ENCODE measurements at regions of chr7 and their contacts with region 1.

Region 1: GRCh38 chr7:151351027-151351426 is 9.4 kb downstream of the NUB1 start:
- DNase-seq: peak; percentile 55
- H3K4me3 ChIP-seq: no peak overlapping the region
- H3K27ac ChIP-seq: no peak overlapping the region
- H3K4me1 ChIP-seq: peaks cover 10 to 24% (median 18%) of the 10 kb centered on the region in 4 donors
- H3K27me3 ChIP-seq: no peaks in the 10 kb centered on the region
- CTCF ChIP-seq: no peak
- EP300 ChIP-seq: no peak
- POLR2A ChIP-seq: no peak

Region 2: GRCh38 chr7:151301471-151302462 is 49.3 kb before region 1 on chr7:
- intact Hi-C with region 1: no loop called
- DNase-seq: no peak
- H3K4me3 ChIP-seq: no peak overlapping the region
- H3K27ac ChIP-seq: no peak overlapping the region
- H3K4me1 ChIP-seq: peaks cover 10 to 13% (median 12%) of the 10 kb centered on the region in 4 donors
- H3K27me3 ChIP-seq: peaks cover 0 to 51% (median 11%) of the 10 kb centered on the region in 4 donors
- CTCF ChIP-seq: no peak
- EP300 ChIP-seq: no peak
- POLR2A ChIP-seq: no peak

Region 3: DNA sequence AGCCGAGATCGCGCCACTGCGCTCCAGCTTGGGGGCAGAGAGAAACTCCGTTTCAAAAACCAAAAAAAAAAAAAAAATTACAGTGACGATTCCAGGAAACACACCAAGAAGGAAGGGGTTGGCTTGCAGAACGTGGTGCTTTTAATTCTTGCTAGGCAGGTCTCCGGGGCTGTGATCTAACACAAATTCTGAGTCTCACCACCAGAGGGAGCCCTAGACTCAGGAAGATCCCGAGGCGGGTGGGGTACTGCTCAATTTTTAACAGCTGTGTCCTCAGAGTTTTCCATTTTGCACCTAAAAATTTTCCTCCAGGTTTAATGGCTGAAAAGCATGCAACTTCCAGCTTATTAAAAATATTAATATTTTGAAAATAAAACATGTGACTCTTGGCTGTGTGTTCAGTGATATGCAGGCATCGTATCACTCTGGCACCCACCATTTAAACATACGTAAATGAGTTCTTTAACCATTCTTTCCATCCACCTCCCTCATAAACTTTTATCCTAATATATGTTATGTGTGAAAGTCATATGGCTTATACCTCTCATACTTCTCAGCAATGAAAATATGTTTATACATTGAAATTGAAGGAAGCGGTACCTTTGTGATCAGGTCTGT is 35.9 kb before region 1 on chr7:
- intact Hi-C with region 1: loop called (anchors 2 kb)
- DNase-seq: peak; percentile 96
- H3K4me3 ChIP-seq: no peak overlapping the region
- H3K27ac ChIP-seq: no peak overlapping the region
- H3K4me1 ChIP-seq: peaks cover 3 to 16% (median 15%) of the 10 kb centered on the region in 4 donors
- H3K27me3 ChIP-seq: no peaks in the 10 kb centered on the region
- CTCF ChIP-seq: peak; percentile 82 to 84 (median 83)
- EP300 ChIP-seq: no peak
- POLR2A ChIP-seq: no peak

Measured in esophagus muscularis mucosa (tissue), 4 donors.